WTC11 (cell line): ENCODE measurements at regions of chr12 and their contacts with region 1.

Region 1: GRCh38 chr12:105357162-105357691 is 26.7 kb downstream of the C12orf75 start:
- DNase-seq: no peak
- ATAC-seq: no peak
- H3K4me3 Mint-ChIP-seq: no peak overlapping the region
- H3K27ac Mint-ChIP-seq: no peak overlapping the region
- H3K4me1 Mint-ChIP-seq: peaks cover 19% of the 10 kb centered on the region
- H3K27me3 Mint-ChIP-seq: no peaks in the 10 kb centered on the region; the same call in 1 of the 2 replicates
- CTCF ChIP-seq: no peak

Region 2: GRCh38 chr12:105783983-105784947 is 427.0 kb after region 1 on chr12:
- CTCF ChIA-PET with region 1: no interaction called
- POLR2A ChIA-PET with region 1: interaction called, 19 read pairs
- DNase-seq: no peak
- ATAC-seq: no peak
- H3K4me3 Mint-ChIP-seq: no peak overlapping the region
- H3K27ac Mint-ChIP-seq: no peak overlapping the region
- H3K4me1 Mint-ChIP-seq: peaks cover 13% of the 10 kb centered on the region
- H3K27me3 Mint-ChIP-seq: no peaks in the 10 kb centered on the region
- CTCF ChIP-seq: no peak